HepG2 (cell line): ENCODE measurements at regions of chr7 and their contacts with region 1.

Region 1: GRCh38 chr7:135286876-135287275 is 53.2 kb downstream of the STRA8 start:
- DNase-seq: no peak
- ATAC-seq: no peak
- H3K4me3 ChIP-seq: no peak overlapping the region
- H3K27ac ChIP-seq: no peak overlapping the region
- H3K4me1 ChIP-seq: 0 out of 2 replicates have a peak, but pooled peaks cover 8% of the 10 kb centered on the region
- H3K27me3 ChIP-seq: no peaks in the 10 kb centered on the region; a peak in 1 of 5 replicates
- CTCF ChIP-seq: no peak
- EP300 ChIP-seq: no peak
- POLR2A ChIP-seq: no peak
- RAD21 ChIP-seq: no peak

Region 2: GRCh38 chr7:135335628-135336139 is 48.8 kb after region 1 on chr7:
- CTCF ChIA-PET with region 1: interaction called, 81 read pairs
- POLR2A ChIA-PET with region 1: no interaction called
- in situ Hi-C with region 1: loop called (anchors 5 kb)
- intact Hi-C with region 1: no loop called
- DNase-seq: peak; percentile 80
- ATAC-seq: peak; percentile 98
- H3K4me3 ChIP-seq: no peak overlapping the region
- H3K27ac ChIP-seq: no peak overlapping the region
- H3K4me1 ChIP-seq: 0 out of 2 replicates have a peak, but pooled peaks cover under 1% of the 10 kb centered on the region
- H3K27me3 ChIP-seq: no peaks in the 10 kb centered on the region
- CTCF ChIP-seq: peak; percentile 95
- EP300 ChIP-seq: no peak
- POLR2A ChIP-seq: no peak
- RAD21 ChIP-seq: peak; percentile 93

Region 3: GRCh38 chr7:136517971-136518370 is 1231.1 kb after region 1 on chr7:
- CTCF ChIA-PET with region 1: no interaction called
- POLR2A ChIA-PET with region 1: no interaction called
- in situ Hi-C with region 1: no loop called
- intact Hi-C with region 1: no loop called
- DNase-seq: no peak
- ATAC-seq: no peak
- H3K4me3 ChIP-seq: no peak overlapping the region
- H3K27ac ChIP-seq: no peak overlapping the region
- H3K4me1 ChIP-seq: no peaks in the 10 kb centered on the region
- H3K27me3 ChIP-seq: no peaks in the 10 kb centered on the region
- CTCF ChIP-seq: no peak
- EP300 ChIP-seq: no peak
- POLR2A ChIP-seq: no peak
- RAD21 ChIP-seq: no peak